Colonic mucosa (tissue), 4 donors: ENCODE measurements at regions of chr3 and their contacts with region 1.

Region 1: GRCh38 chr3:142152384-142152783 is 3.0 kb upstream of the TFDP2 start:
- DNase-seq: no peak
- H3K4me3 ChIP-seq: no peak overlapping the region
- H3K27ac ChIP-seq: no peak overlapping the region
- H3K4me1 ChIP-seq: no peaks in the 10 kb centered on the region
- H3K27me3 ChIP-seq: no peaks in the 10 kb centered on the region
- CTCF ChIP-seq: no peak

Region 2: DNA sequence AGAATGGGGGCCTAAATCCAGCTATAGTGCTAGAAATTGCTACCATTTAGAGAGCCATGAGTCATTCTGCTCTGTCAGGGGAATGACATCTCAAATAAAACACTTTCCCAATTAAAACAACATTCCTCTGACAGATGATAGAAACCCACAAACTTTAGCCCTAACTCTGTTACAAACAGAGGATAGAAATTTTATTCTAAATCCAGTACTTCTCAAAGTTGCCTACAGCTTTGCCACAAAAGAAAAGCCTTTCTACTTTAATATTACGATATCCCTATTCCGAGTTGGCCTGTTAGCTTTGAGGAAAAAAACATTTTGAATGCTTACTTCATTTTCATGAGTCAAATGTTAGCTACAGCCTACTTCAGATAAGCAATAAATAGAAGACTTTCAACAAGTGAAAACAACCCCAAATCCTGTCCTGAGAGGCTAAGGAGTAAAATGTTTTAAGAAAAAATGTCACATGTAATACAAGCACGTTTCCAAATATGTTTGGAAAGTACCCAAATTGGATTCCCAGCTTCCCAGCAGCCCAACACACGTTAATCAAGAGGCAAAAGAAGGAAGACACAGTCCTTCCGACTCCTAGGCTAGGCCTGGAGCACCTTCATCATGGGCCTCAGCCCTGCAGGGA is 192.3 kb before region 1 on chr3:
- intact Hi-C with region 1: loop called (anchors 10 kb)
- DNase-seq: no peak
- H3K4me3 ChIP-seq: no peak overlapping the region
- H3K27ac ChIP-seq: no peak overlapping the region
- H3K4me1 ChIP-seq: no peaks in the 10 kb centered on the region
- H3K27me3 ChIP-seq: no peaks in the 10 kb centered on the region
- CTCF ChIP-seq: no peak

Region 3: DNA sequence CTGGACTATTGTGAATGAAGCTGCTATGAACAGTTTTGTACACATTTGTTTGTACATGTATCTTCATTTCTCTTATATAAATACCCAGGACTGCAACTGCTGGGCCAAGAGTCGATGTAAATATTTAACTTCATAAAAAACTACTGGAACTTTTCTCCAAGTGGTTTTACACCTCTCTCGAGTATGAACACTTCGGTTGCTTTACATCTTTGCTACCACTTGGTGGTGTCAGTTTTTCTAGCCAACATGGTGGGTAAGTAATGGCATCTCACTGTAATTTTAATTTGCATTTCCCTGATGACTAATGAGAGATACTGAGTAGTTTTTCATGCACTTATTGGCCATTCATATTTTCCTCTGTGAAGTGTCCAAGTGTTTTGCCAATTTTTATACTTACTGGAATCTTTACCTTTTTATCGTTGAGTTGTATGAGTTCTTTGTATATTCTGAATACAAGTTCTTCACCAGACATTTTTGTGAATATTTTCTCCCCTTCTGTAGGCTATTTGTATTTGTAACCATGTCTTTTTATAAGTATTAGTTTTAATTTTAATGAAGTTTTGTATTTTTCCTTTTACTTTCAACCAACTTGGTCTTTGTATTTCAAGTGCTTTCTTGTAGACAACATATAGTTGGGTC is 692.1 kb after region 1 on chr3:
- intact Hi-C with region 1: no loop called
- DNase-seq: no peak
- H3K4me3 ChIP-seq: no peak overlapping the region
- H3K27ac ChIP-seq: no peak overlapping the region
- H3K4me1 ChIP-seq: no peaks in the 10 kb centered on the region
- H3K27me3 ChIP-seq: no peaks in the 10 kb centered on the region
- CTCF ChIP-seq: peak; percentile 48